B cell (primary cell): ENCODE measurements at regions of chr12 and their contacts with region 1.

Region 1: DNA sequence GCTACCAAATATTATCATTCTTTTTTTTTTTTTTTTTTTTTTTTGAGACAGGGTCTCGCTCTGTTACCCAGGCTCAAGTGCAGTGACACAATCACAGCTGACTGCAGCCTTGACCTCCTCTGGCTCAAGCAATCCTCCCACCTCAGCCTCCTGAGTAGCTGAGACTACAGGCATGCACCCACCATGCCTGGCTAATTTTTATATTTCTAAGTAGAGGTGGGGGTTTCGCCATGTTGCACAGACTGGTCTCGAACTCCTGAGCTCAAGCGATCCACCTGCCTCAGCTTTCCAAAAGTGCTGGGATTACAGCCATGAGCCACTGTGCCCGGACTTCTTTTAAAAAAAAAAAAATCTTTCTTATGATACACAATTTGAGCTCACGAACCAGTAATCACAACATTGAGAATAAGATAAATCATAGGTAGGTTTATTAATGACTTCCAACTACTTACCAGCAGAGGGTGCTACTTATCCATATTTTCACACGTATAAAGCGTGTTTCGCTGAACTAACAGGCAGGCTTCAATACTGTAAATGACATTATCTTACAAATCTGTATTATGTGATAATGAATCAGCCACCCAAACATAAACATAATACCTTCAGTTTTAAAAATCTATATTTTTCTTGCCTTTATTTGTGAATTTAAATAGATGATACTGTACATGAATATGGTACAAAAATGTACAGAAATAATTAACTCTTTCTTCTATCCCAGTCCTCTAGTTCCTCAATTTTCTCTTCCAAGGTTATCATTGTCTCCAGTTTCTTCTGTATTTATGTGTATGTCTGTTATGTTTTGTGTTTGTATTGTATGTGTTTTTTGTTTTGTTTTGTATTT is 42.5 kb upstream of the BCAT1 start:
- DNase-seq: peak; percentile 82
- ATAC-seq: peak; percentile 74
- H3K4me3 ChIP-seq: no peak overlapping the region
- H3K4me3 Mint-ChIP-seq: no peak overlapping the region
- H3K27ac ChIP-seq: no peak overlapping the region
- H3K27ac Mint-ChIP-seq: no peak overlapping the region
- H3K4me1 ChIP-seq: peaks cover 28 to 37% of the 10 kb centered on the region in 2 donors
- H3K4me1 Mint-ChIP-seq: peaks cover 35% of the 10 kb centered on the region
- H3K27me3 ChIP-seq: no peaks in the 10 kb centered on the region
- H3K27me3 Mint-ChIP-seq: no peaks in the 10 kb centered on the region
- CTCF ChIP-seq: peak; percentile 82

Region 2: DNA sequence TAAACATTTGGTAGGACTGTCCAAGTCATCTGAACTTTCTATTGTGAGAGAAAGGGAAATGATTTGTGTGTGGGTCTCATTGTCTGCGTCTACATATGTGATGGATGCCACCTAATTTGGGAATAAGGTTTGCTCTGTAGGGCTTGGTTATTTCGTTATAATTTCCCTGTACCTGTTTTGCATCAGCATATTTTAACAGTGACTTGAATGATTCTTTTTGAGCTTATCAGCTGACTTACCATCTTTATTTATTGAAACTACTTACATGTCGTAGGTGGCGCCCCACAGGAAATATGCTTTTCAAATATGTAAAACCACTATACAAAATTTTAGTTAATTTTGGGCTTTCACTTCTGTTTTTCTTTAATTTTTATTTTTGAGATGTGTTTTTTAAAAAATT is 13.9 kb after region 1 on chr12:
- CTCF ChIA-PET with region 1: interaction called, 14 read pairs
- POLR2A ChIA-PET with region 1: no interaction called
- intact Hi-C with region 1: loop called (anchors 1 kb)
- DNase-seq: peak; percentile 76
- ATAC-seq: peak; percentile 69
- H3K4me3 ChIP-seq: peak overlapping the region in 3 of 5 experiments; percentile 9 to 40 (median 12)
- H3K4me3 Mint-ChIP-seq: peak overlapping the region; percentile 83
- H3K27ac ChIP-seq: peak overlapping the region; percentile 54 to 57
- H3K27ac Mint-ChIP-seq: peak overlapping the region; percentile 87
- H3K4me1 ChIP-seq: peaks cover 44 to 50% of the 10 kb centered on the region in 2 donors
- H3K4me1 Mint-ChIP-seq: peaks cover 66% of the 10 kb centered on the region
- H3K27me3 ChIP-seq: no peaks in the 10 kb centered on the region
- H3K27me3 Mint-ChIP-seq: no peaks in the 10 kb centered on the region
- CTCF ChIP-seq: peak; percentile 20

Region 3: DNA sequence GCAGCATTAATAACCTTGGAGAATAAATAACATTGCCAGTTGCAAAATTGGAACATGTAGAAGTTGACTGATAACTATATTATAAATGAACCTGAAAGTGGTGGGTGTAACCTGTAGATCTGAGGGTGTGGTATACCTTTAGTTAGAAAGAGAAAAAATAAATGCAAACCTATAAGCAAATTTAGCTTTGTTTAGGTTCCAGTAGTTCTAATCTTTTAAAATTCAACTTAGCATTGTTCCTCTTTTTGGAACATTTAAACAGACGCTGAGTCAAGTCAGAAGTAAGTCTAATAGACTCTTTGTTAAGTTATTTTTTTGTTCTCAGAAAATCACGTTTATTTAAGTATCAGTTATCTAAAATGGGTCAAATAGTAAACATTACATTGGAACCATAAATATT is 83.5 kb after region 1 on chr12:
- CTCF ChIA-PET with region 1: interaction called, 13 read pairs
- POLR2A ChIA-PET with region 1: interaction called, 4 read pairs
- intact Hi-C with region 1: no loop called
- DNase-seq: no peak
- ATAC-seq: peak; percentile 43
- H3K4me3 ChIP-seq: no peak overlapping the region
- H3K4me3 Mint-ChIP-seq: peak overlapping the region; percentile 29
- H3K27ac ChIP-seq: peak overlapping the region in 1 of 2 donors; percentile 54
- H3K27ac Mint-ChIP-seq: peak overlapping the region; percentile 62
- H3K4me1 ChIP-seq: peaks cover 43 to 44% of the 10 kb centered on the region in 2 donors
- H3K4me1 Mint-ChIP-seq: peaks cover 64% of the 10 kb centered on the region
- H3K27me3 ChIP-seq: no peaks in the 10 kb centered on the region
- H3K27me3 Mint-ChIP-seq: no peaks in the 10 kb centered on the region
- CTCF ChIP-seq: no peak

Region 4: GRCh38 chr12:25119020-25119419 is 127.6 kb after region 1 on chr12:
- CTCF ChIA-PET with region 1: interaction called, 24 read pairs
- POLR2A ChIA-PET with region 1: no interaction called
- intact Hi-C with region 1: no loop called
- DNase-seq: no peak
- ATAC-seq: no peak
- H3K4me3 ChIP-seq: no peak overlapping the region
- H3K4me3 Mint-ChIP-seq: no peak overlapping the region
- H3K27ac ChIP-seq: no peak overlapping the region
- H3K27ac Mint-ChIP-seq: no peak overlapping the region
- H3K4me1 ChIP-seq: no peaks in the 10 kb centered on the region
- H3K4me1 Mint-ChIP-seq: no peaks in the 10 kb centered on the region
- H3K27me3 ChIP-seq: no peaks in the 10 kb centered on the region
- H3K27me3 Mint-ChIP-seq: no peaks in the 10 kb centered on the region
- CTCF ChIP-seq: no peak

Region 5: DNA sequence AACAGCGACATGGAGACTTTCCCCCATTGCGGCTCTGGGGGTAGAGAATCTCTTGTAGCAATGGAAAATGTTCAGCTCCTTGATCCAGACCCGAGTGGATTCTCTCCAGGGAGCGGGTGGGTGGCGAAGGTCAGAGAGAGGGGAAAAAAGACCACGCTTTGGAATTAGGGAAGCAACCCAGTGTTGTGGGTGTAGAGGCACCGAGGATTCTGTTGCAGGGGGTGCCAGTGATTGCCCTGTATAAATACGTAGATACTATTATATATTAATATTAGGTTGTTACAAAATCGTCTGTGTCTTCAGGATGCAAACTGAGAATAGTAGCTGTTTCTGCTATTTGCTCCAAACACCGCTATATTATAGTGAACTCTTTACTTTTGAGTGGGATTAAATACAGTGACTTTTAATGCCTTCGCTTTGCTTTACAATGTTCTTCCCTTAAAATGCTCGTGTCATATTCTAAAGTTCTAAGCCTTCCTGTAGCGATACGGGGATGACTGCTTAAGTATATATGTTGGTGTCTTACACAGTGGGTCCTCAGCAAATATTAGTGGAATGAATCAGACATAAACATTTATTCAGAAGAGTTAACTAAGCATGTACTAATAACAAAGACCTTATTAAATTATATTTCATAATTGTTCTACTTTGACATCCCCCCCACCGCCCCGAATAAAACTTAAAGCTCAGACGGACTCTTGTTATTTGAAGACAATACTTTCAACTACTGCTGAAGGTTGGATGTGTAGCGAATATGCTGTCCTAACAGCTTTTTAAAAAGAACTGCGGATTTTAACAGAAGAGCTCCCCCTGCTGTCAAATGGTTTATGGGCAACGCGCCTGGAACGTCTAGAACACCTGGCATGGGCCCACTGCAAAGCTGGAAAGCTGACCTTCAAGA is 395.7 kb after region 1 on chr12:
- CTCF ChIA-PET with region 1: no interaction called
- POLR2A ChIA-PET with region 1: no interaction called
- intact Hi-C with region 1: loop called (anchors 1 kb)
- DNase-seq: peak; percentile 90
- ATAC-seq: peak; percentile 14
- H3K4me3 ChIP-seq: peak overlapping the region; percentile 68 to 97 (median 90)
- H3K4me3 Mint-ChIP-seq: peak overlapping the region; percentile 96
- H3K27ac ChIP-seq: peak overlapping the region; percentile 100
- H3K27ac Mint-ChIP-seq: peak overlapping the region; percentile 100
- H3K4me1 ChIP-seq: peaks cover 6 to 30% of the 10 kb centered on the region in 2 donors
- H3K4me1 Mint-ChIP-seq: peaks cover 41% of the 10 kb centered on the region
- H3K27me3 ChIP-seq: no peaks in the 10 kb centered on the region
- H3K27me3 Mint-ChIP-seq: no peaks in the 10 kb centered on the region
- CTCF ChIP-seq: peak; percentile 93